Right ventricle myocardium inferior (tissue), 1 donor: ENCODE measurements at regions of chr6 and their contacts with region 1.

Region 1: DNA sequence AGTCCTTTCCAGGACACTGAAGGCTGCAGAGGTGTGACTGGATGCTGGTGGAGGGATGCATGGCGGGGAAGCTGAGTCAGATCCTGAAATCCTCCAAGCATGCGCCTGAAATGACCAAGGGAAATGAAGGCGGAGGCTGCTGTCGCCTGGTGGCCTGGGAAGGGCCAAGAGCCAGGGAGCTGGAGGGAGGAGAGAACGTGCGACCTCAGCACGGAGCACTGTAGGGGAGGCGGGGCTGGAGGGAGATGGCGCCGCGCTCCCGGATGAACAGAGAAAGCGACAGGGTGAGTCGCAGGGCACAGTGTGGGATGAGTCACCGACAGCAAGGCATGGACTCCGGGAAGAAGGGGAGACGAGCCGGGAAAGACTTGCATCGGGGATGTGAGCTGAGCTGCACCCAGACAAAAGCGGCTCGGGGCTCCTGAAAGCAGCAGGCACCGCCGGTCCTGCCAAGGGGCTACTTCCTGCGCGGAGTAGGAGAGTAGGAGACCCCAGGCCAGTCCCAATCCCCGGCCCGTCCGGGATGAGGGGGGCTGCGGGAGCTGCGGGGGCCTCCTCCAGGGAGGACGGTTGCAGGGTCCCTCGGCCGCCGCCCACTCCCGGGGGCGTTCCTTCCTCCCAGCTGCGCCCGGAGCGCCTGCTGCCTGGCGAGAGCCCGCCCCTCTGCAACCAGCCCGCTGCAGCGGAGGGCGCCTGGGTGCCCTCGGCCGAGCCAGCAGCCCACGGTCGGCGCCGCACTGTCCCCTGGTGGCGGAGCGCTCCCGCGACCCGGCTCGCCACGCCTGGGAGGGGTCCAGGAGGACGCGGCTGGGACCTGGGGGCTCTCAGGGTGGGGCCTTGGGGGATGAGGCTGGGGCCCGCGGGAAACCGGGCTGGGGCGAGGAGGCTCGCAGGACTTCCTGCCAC is 11.0 kb upstream of the NQO2 start:
- DNase-seq: peak; percentile 95
- ATAC-seq: peak; percentile 88

Region 2: GRCh38 chr6:2791124-2791974 is 197.3 kb before region 1 on chr6:
- intact Hi-C with region 1: loop called (anchors 1 kb)
- DNase-seq: no peak
- ATAC-seq: peak; percentile 89

Region 3: GRCh38 chr6:2931970-2932748 is 56.5 kb before region 1 on chr6:
- intact Hi-C with region 1: loop called (anchors 10 kb)
- DNase-seq: no peak
- ATAC-seq: peak; percentile 96

Region 4: GRCh38 chr6:2971420-2972218 is 17.1 kb before region 1 on chr6 and contains the start of gene SERPINB6:
- intact Hi-C with region 1: loop called (anchors 2 kb)
- DNase-seq: peak; percentile 92
- ATAC-seq: peak; percentile 92
- total RNA-seq, gene SERPINB6: 275 TPM

Region 5: GRCh38 chr6:3990692-3991501 is 1002.2 kb after region 1 on chr6:
- intact Hi-C with region 1: loop called (anchors 10 kb)
- DNase-seq: peak; percentile 88
- ATAC-seq: peak; percentile 93